ENCODE measurements at regions of chr10 and their contacts with region 1.

Region 1: GRCh38 chr10:73644015-73644743 is 2.9 kb upstream of the MYOZ1 start:
- DNase-seq: peak; percentile 31
- H3K4me3 ChIP-seq: no peak overlapping the region
- H3K27ac ChIP-seq: no peak overlapping the region
- H3K4me1 ChIP-seq: peaks cover 8% of the 10 kb centered on the region
- H3K27me3 ChIP-seq: no peaks in the 10 kb centered on the region
- CTCF ChIP-seq: peak; percentile 84 to 87

Region 2: GRCh38 chr10:73529089-73529832 is 114.9 kb before region 1 on chr10:
- CTCF ChIA-PET with region 1: no interaction called
- dilution Hi-C with region 1: no loop called
- in situ Hi-C with region 1: loop called in 1 of 2 experiments (anchors 5 kb)
- intact Hi-C with region 1: loop called (anchors 1 kb)
- DNase-seq: peak; percentile 53
- H3K4me3 ChIP-seq: no peak overlapping the region
- H3K27ac ChIP-seq: no peak overlapping the region
- H3K4me1 ChIP-seq: no peaks in the 10 kb centered on the region
- H3K27me3 ChIP-seq: no peaks in the 10 kb centered on the region
- CTCF ChIP-seq: peak; percentile 71 to 81

Region 3: GRCh38 chr10:73537288-73537687 is 106.9 kb before region 1 on chr10:
- CTCF ChIA-PET with region 1: no interaction called
- dilution Hi-C with region 1: no loop called
- in situ Hi-C with region 1: loop called in 1 of 2 experiments (anchors 5 kb)
- intact Hi-C with region 1: no loop called
- DNase-seq: no peak
- H3K4me3 ChIP-seq: no peak overlapping the region
- H3K27ac ChIP-seq: no peak overlapping the region
- H3K4me1 ChIP-seq: no peaks in the 10 kb centered on the region
- H3K27me3 ChIP-seq: no peaks in the 10 kb centered on the region
- CTCF ChIP-seq: no peak

Region 4: DNA sequence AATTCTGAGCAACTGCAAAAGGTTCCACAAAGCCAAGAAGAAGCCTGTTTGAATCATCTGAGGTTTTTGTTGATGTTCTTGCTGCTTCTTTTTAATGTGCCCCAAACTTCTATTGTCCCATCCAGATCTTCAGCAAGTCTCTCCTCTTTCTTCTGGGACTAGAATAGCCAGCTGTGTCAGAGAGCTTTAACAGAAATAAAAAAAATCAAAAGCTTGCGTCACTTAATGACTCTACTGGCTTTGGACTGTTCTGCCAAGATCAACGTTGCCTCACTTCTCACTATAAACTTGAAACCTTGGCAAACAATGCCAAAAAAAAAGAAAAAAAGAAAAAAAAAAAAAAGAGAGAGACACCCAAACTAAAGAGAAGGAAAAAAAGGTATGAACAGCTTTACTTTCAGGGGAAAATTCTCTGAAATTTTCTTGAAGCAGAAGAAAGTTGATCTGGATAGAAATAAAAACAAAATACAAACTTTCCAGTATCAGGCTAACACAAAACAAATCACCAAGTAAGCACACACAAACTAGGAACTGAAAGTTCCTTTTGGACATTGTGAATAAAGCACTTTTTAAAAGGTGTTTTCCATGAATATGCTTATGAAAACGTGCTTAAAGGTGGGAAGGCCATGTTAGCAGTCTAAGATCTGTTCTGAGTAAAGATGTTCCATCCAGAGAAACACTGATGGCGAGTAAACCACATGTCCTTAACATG is 67.8 kb before region 1 on chr10:
- CTCF ChIA-PET with region 1: no interaction called
- dilution Hi-C with region 1: loop called (anchors 5 kb)
- in situ Hi-C with region 1: no loop called
- intact Hi-C with region 1: no loop called
- DNase-seq: peak; percentile 69
- H3K4me3 ChIP-seq: no peak overlapping the region
- H3K27ac ChIP-seq: no peak overlapping the region
- H3K4me1 ChIP-seq: peaks cover 3% of the 10 kb centered on the region
- H3K27me3 ChIP-seq: no peaks in the 10 kb centered on the region
- CTCF ChIP-seq: no peak

Region 5: GRCh38 chr10:73609116-73609515 is 35.1 kb before region 1 on chr10:
- CTCF ChIA-PET with region 1: no interaction called
- dilution Hi-C with region 1: no loop called
- in situ Hi-C with region 1: no loop called
- intact Hi-C with region 1: no loop called
- DNase-seq: no peak
- H3K4me3 ChIP-seq: no peak overlapping the region
- H3K27ac ChIP-seq: no peak overlapping the region
- H3K4me1 ChIP-seq: no peaks in the 10 kb centered on the region
- H3K27me3 ChIP-seq: no peaks in the 10 kb centered on the region
- CTCF ChIP-seq: no peak

Region 6: GRCh38 chr10:73717556-73717955 is 73.4 kb after region 1 on chr10:
- CTCF ChIA-PET with region 1: no interaction called
- dilution Hi-C with region 1: no loop called
- in situ Hi-C with region 1: no loop called
- intact Hi-C with region 1: no loop called
- DNase-seq: no peak
- H3K4me3 ChIP-seq: no peak overlapping the region
- H3K27ac ChIP-seq: no peak overlapping the region
- H3K4me1 ChIP-seq: no peaks in the 10 kb centered on the region
- H3K27me3 ChIP-seq: no peaks in the 10 kb centered on the region
- CTCF ChIP-seq: no peak

Region 7: DNA sequence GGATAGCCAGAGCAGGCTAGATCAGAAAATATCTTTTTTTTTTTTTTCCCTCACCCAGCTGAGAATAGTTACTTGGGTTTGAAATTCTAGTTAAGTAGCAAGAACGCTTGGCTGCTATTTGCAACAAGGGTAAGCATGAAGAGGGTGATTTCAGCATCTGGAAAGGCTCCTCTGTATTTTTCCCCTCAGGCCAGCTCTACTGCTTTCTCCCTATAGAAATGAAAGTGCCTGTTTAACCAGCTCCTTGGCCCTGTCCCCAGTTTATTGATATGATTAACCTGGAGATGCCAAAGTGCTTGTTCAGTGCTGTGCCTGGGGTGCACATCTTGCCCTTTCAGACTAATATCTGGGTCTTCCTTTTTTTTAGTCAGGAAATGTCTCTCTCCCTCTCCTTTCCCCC is 469.4 kb after region 1 on chr10:
- CTCF ChIA-PET with region 1: no interaction called
- dilution Hi-C with region 1: no loop called
- in situ Hi-C with region 1: no loop called
- intact Hi-C with region 1: no loop called
- DNase-seq: peak; percentile 19
- H3K4me3 ChIP-seq: no peak overlapping the region
- H3K27ac ChIP-seq: no peak overlapping the region
- H3K4me1 ChIP-seq: peaks cover 20% of the 10 kb centered on the region
- H3K27me3 ChIP-seq: no peaks in the 10 kb centered on the region
- CTCF ChIP-seq: no peak